ENCODE measurements at regions of chr3 and their contacts with region 1.

Region 1: DNA sequence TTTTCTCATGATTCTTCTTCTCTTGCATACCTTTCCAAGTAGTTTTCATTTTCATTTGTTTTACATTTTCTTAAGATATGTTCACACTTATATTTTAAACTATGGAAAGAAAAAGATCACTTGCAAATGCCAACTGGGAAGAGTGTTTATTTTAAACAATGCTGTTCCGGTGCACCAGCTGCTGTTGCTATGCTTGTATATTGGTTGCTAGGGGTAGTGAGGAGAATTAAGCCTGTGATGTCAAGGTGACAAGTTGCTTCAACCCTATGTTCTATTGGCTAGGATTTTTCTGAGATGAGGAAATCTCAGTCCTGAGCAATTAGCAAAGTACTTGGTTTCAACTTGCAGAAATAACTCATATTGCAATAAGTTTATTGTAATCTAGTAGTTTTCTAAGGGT is 500.1 kb downstream of the MFSD1 start:
- DNase-seq: no peak
- ATAC-seq: no peak
- H3K4me3 ChIP-seq: no peak overlapping the region
- H3K4me3 Mint-ChIP-seq: no peak overlapping the region
- H3K27ac ChIP-seq: no peak overlapping the region
- H3K27ac Mint-ChIP-seq: no peak overlapping the region
- H3K4me1 ChIP-seq: no peaks in the 10 kb centered on the region
- H3K4me1 Mint-ChIP-seq: no peaks in the 10 kb centered on the region
- H3K27me3 ChIP-seq: no peaks in the 10 kb centered on the region
- H3K27me3 Mint-ChIP-seq: peaks cover 2% of the 10 kb centered on the region
- CTCF ChIP-seq: no peak

Region 2: DNA sequence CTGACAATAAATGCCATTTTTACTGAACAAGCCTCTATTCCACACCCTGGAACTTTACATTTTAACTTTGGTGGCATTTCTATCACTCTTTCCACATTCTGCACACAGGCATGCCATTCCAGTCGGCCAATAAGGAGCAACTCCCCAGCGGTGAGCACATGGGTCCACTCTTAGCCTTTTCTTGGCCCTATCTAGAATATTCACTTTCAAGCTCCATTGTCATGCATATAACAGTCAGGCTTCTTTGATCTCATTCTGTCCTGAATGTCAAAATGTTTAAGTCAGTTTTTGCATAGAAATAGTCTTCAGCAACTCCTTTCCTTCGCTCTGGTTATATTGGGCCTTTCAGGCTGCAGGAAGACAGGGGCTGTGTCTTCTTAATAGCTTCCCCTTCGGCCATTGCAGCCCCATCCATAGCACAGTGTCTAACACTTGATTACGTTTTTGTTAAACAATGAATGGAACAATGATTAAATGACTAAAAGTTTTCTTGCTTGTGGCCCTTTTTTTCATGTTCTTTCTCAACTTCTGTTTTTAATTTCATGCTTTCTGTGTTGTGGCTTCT is 72.8 kb before region 1 on chr3:
- CTCF ChIA-PET with region 1: no interaction called
- POLR2A ChIA-PET with region 1: no interaction called
- intact Hi-C with region 1: loop called in 1 of 2 experiments (anchors 2 kb)
- DNase-seq: no peak
- ATAC-seq: no peak
- H3K4me3 ChIP-seq: no peak overlapping the region
- H3K4me3 Mint-ChIP-seq: no peak overlapping the region
- H3K27ac ChIP-seq: no peak overlapping the region
- H3K27ac Mint-ChIP-seq: no peak overlapping the region
- H3K4me1 ChIP-seq: no peaks in the 10 kb centered on the region
- H3K4me1 Mint-ChIP-seq: no peaks in the 10 kb centered on the region
- H3K27me3 ChIP-seq: no peaks in the 10 kb centered on the region
- H3K27me3 Mint-ChIP-seq: peaks cover 6% of the 10 kb centered on the region
- CTCF ChIP-seq: no peak

Region 3: GRCh38 chr3:159340877-159341500 is 39.0 kb after region 1 on chr3:
- CTCF ChIA-PET with region 1: no interaction called
- POLR2A ChIA-PET with region 1: no interaction called
- intact Hi-C with region 1: no loop called
- DNase-seq: no peak
- ATAC-seq: no peak
- H3K4me3 ChIP-seq: no peak overlapping the region
- H3K4me3 Mint-ChIP-seq: no peak overlapping the region
- H3K27ac ChIP-seq: no peak overlapping the region
- H3K27ac Mint-ChIP-seq: no peak overlapping the region
- H3K4me1 ChIP-seq: no peaks in the 10 kb centered on the region
- H3K4me1 Mint-ChIP-seq: no peaks in the 10 kb centered on the region
- H3K27me3 ChIP-seq: no peaks in the 10 kb centered on the region
- H3K27me3 Mint-ChIP-seq: no peaks in the 10 kb centered on the region
- CTCF ChIP-seq: no peak